Activated CD4-positive, alpha-beta memory T cell treated with anti-CD3 and anti-CD28 coated beads for 36 hours (primary cell): ENCODE measurements at regions of chr21 and their contacts with region 1.

Region 1: DNA sequence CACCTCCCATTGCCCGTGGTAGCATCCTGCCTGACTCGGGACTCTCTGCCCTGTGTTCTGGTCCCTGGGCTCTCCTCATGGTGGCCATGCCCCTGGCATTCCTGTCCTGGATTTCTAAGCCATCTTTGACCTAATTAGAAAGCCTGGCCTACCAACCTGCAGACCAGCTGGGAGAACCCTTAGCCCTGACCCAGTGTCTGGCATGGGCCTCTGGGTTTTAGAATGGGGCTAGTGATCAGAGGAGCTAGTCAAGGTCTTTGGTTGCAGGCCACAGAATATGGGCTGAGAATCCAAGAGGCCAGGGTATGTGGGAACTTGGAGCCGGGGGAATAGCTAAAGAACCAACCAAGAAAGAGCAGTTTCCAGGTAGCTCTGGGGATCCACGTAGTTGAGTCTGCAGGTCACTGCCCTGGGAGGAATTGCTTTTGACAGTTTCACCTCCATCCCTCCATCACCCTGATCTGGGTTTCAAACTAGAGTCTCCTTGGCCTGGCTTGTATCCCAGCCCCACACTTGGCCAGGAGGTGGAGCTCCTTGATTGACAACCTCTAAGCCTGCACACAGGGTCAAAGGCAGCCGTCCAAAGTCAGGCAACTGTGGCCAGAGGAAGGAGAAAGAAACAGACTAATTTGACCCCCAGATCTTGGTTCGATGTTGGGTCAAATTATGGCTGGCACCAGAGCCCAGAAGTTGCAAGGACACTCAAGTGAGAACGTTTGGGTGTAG is 54.7 kb upstream of the ABCG1 start:
- DNase-seq: peak; percentile 76
- H3K4me3 Mint-ChIP-seq: no peak overlapping the region
- H3K27ac Mint-ChIP-seq: no peak overlapping the region
- H3K4me1 Mint-ChIP-seq: peaks cover 13% of the 10 kb centered on the region
- H3K27me3 Mint-ChIP-seq: no peaks in the 10 kb centered on the region

Region 2: DNA sequence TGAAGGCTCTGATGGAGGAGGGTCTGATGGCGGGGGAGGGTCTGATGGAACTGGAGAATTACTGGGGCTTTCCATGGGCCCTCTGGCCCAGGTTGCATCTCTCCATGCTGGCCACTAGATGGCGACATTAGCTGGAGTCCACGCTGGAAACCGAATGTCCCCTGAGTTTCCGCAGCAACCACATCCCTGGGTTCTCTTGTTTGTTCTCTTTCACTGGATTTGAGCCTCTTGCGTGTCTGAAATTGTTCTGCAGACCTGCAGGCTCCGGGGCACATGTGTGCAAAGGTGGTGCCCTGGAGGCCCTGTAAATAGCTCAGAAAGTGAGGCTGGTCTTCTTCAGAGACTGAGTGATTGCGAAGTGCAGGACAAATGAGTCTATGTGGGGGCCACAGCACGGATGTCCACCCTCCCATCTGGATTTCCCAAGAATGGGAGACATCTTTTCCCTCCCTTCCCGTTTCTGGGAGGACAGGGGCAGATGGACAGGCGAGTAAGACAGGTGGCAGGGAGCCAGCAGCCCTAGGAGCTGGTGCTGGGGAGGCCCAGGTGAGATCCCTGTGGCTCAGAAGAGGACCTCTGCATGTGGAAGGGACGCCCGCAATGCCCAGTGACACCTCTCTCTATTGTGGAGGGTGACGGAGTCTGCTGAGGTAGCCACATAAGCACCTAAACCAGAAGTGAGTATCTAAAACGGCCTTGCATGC is 18.5 kb before region 1 on chr21:
- CTCF ChIA-PET with region 1: interaction called, 12 read pairs
- POLR2A ChIA-PET with region 1: no interaction called
- intact Hi-C with region 1: no loop called
- DNase-seq: peak; percentile 75
- H3K4me3 Mint-ChIP-seq: no peak overlapping the region
- H3K27ac Mint-ChIP-seq: no peak overlapping the region
- H3K4me1 Mint-ChIP-seq: peaks cover 3% of the 10 kb centered on the region
- H3K27me3 Mint-ChIP-seq: no peaks in the 10 kb centered on the region

Region 3: GRCh38 chr21:42227909-42228708 is 63.9 kb after region 1 on chr21:
- CTCF ChIA-PET with region 1: interaction called, 5 read pairs
- POLR2A ChIA-PET with region 1: no interaction called
- intact Hi-C with region 1: loop called (anchors 2 kb)
- DNase-seq: peak; percentile 96
- H3K4me3 Mint-ChIP-seq: peak overlapping the region; percentile 63
- H3K27ac Mint-ChIP-seq: peak overlapping the region; percentile 93
- H3K4me1 Mint-ChIP-seq: peaks cover 76% of the 10 kb centered on the region
- H3K27me3 Mint-ChIP-seq: no peaks in the 10 kb centered on the region

Region 4: GRCh38 chr21:42309753-42310221 is 145.6 kb after region 1 on chr21:
- CTCF ChIA-PET with region 1: interaction called, 10 read pairs
- POLR2A ChIA-PET with region 1: no interaction called
- intact Hi-C with region 1: no loop called
- DNase-seq: peak; percentile 83
- H3K4me3 Mint-ChIP-seq: no peak overlapping the region
- H3K27ac Mint-ChIP-seq: no peak overlapping the region
- H3K4me1 Mint-ChIP-seq: peaks cover 3% of the 10 kb centered on the region
- H3K27me3 Mint-ChIP-seq: peaks cover 5% of the 10 kb centered on the region

Region 5: DNA sequence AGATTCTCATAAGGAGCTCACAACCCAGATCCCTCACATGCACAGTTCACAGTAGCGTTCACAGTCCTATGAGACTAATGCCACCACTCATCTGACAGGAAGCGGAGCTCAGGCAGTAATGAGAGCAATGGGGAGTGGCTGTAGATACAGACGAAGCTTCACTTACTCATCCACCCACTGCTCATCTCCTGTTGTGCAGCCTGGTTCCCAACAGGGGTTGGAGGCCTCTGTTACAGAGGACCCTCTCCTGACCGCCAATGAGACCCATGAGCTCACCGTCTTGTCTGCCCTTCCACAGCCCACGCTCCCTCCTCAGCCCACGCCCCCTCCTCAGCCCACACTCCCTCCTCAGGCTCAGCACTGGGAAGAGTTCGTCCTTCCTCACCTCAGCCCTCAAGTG is 292.2 kb after region 1 on chr21:
- CTCF ChIA-PET with region 1: no interaction called
- POLR2A ChIA-PET with region 1: no interaction called
- intact Hi-C with region 1: loop called (anchors 5 kb)
- DNase-seq: peak; percentile 77
- H3K4me3 Mint-ChIP-seq: no peak overlapping the region
- H3K27ac Mint-ChIP-seq: peak overlapping the region; percentile 81
- H3K4me1 Mint-ChIP-seq: peaks cover 36% of the 10 kb centered on the region
- H3K27me3 Mint-ChIP-seq: no peaks in the 10 kb centered on the region